Activated CD4-positive, alpha-beta memory T cell treated with anti-CD3 and anti-CD28 coated beads for 36 hours (primary cell): ENCODE measurements at regions of chrX and their contacts with region 1.

Region 1: DNA sequence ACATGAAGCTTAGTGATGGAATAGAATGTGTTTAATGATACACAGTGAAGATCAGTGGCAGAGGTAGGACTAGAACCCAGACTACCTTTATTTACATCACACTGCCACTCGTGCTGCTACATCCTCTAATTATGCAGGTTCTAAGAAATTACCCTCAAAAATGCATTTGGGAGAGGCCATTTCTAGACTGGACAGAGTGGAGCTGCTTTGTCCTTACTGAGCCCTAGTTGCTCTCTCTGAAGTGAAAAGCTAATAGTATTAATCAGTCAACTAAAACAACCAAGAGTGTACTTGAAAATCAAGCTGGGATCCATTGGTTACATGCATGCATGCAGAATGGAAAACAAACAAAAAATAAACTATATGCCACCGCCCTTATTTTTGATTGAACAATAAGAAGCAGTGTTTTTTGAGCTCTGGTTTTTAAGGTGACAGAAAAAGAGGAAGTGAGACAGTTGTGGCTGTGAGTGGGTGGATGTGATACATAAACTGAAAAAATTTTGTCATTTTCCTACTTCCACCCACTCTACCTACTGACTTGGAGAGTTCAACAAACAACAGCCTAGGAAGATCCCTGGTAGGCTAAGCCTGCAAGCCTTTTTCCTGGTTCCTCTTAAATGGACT is 6.8 kb upstream of the VSIG4 start:
- DNase-seq: peak; percentile 49
- H3K4me3 Mint-ChIP-seq: peak overlapping the region; percentile 33
- H3K27ac Mint-ChIP-seq: peak overlapping the region; percentile 93
- H3K4me1 Mint-ChIP-seq: peaks cover 33% of the 10 kb centered on the region
- H3K27me3 Mint-ChIP-seq: no peaks in the 10 kb centered on the region

Region 2: DNA sequence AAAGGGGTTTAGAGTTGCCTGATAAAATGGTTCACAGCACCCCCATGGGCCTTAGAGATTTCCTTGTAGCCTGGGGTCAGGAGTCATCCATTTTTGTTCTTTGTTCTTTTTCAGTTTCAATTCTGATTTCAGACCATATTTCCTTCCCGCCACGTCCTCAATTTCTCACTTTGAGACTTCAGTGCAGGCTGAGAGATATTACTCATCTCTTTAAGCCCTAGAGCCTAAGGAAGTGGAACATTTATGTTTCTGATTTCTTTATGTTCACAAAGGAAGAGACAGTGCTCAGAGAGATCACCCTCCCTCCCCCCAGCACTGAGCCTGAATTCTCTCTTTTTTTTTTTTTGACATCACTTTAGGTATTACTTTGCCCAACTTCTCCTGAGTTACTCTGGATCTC is 323.0 kb before region 1 on chrX:
- CTCF ChIA-PET with region 1: no interaction called
- POLR2A ChIA-PET with region 1: no interaction called
- intact Hi-C with region 1: loop called (anchors 2 kb)
- DNase-seq: peak; percentile 62
- H3K4me3 Mint-ChIP-seq: peak overlapping the region; percentile 39
- H3K27ac Mint-ChIP-seq: peak overlapping the region; percentile 93
- H3K4me1 Mint-ChIP-seq: peaks cover 88% of the 10 kb centered on the region
- H3K27me3 Mint-ChIP-seq: no peaks in the 10 kb centered on the region

Region 3: GRCh38 chrX:65866146-65866545 is 180.6 kb before region 1 on chrX:
- CTCF ChIA-PET with region 1: no interaction called
- POLR2A ChIA-PET with region 1: no interaction called
- intact Hi-C with region 1: loop called (anchors 1 kb)
- DNase-seq: peak; percentile 56
- H3K4me3 Mint-ChIP-seq: no peak overlapping the region
- H3K27ac Mint-ChIP-seq: peak overlapping the region; percentile 51
- H3K4me1 Mint-ChIP-seq: peaks cover 33% of the 10 kb centered on the region
- H3K27me3 Mint-ChIP-seq: no peaks in the 10 kb centered on the region

Region 4: DNA sequence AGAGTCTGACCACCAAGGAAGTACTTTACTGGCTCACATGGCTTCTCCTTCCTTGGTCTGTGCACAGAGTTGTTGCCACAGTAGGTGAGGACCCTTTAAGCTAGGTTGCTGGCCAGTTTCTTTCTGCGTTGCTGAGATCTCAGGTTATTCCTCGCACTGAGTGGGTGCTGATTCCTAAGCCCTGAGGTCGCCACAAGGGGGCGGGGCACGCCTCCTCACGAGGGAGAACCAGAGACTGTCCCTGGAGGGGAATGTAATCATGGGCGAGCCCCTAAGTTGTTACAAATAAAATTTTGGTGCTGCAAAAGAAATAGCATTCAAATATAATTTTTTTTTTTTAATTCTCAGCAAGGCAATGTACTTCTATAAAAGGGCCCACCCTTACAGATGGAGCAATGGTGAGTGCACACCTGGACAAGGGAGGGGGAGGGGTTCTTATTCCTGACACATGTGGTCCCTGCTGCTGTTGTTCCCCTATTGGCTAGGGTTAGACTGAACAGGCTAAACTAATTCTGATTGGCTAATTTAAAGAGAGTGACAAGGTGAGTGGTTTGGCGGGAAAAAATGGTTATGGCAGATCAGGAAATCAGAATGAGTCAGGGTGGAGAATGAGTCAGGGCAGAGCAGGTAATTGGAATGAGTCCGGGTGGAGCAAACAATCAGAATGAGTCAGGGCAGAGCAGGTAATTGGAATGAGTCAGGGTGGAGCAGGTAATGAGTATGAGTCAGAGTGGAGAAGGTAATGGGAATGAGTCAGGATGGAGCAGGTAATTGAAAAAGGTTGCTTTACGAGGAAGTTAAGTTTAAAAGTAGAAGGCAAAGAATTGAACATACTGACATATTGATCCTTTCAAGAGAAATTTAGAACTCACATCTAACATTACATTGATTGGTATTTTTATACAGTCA is 114.3 kb before region 1 on chrX:
- CTCF ChIA-PET with region 1: no interaction called
- POLR2A ChIA-PET with region 1: no interaction called
- intact Hi-C with region 1: loop called (anchors 2 kb)
- DNase-seq: peak; percentile 62
- H3K4me3 Mint-ChIP-seq: no peak overlapping the region
- H3K27ac Mint-ChIP-seq: peak overlapping the region; percentile 52
- H3K4me1 Mint-ChIP-seq: peaks cover 15% of the 10 kb centered on the region
- H3K27me3 Mint-ChIP-seq: no peaks in the 10 kb centered on the region

Region 5: GRCh38 chrX:66004928-66005829 is 41.5 kb before region 1 on chrX:
- CTCF ChIA-PET with region 1: no interaction called
- POLR2A ChIA-PET with region 1: no interaction called
- intact Hi-C with region 1: loop called (anchors 1 kb)
- DNase-seq: no peak
- H3K4me3 Mint-ChIP-seq: no peak overlapping the region
- H3K27ac Mint-ChIP-seq: peak overlapping the region; percentile 81
- H3K4me1 Mint-ChIP-seq: peaks cover 59% of the 10 kb centered on the region
- H3K27me3 Mint-ChIP-seq: no peaks in the 10 kb centered on the region

Region 6: GRCh38 chrX:66074920-66075879 is 28.5 kb after region 1 on chrX:
- CTCF ChIA-PET with region 1: interaction called, 3 read pairs
- POLR2A ChIA-PET with region 1: interaction called, 3 read pairs
- intact Hi-C with region 1: loop called (anchors 1 kb)
- DNase-seq: peak; percentile 70
- H3K4me3 Mint-ChIP-seq: peak overlapping the region; percentile 40
- H3K27ac Mint-ChIP-seq: peak overlapping the region; percentile 76
- H3K4me1 Mint-ChIP-seq: peaks cover 26% of the 10 kb centered on the region
- H3K27me3 Mint-ChIP-seq: no peaks in the 10 kb centered on the region

Region 7: DNA sequence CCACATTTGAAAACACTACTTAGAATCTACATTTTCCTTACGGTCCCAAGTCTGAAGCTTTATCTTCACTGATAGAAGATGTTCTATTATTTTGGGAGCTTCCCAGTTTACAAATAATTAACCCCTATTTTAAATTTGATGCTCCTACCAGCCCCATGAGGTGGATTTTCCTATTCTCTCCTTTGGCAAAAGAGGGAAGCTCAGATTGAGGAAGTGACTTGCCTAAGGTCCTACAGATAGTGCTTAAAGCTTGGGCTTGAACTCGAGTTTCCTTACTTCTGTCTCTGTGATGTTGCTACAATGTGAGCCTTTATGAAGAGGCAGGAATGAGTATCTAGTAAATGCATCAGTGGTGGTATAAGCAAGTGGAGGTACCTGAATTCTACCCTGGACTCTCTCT is 144.8 kb after region 1 on chrX:
- CTCF ChIA-PET with region 1: no interaction called
- POLR2A ChIA-PET with region 1: no interaction called
- intact Hi-C with region 1: no loop called
- DNase-seq: no peak
- H3K4me3 Mint-ChIP-seq: no peak overlapping the region
- H3K27ac Mint-ChIP-seq: no peak overlapping the region
- H3K4me1 Mint-ChIP-seq: peaks cover 3% of the 10 kb centered on the region
- H3K27me3 Mint-ChIP-seq: no peaks in the 10 kb centered on the region